ENCODE measurements at regions of chr15 and their contacts with region 1.

Region 1: GRCh38 chr15:44426975-44427755 is at the start of gene CTDSPL2:
- DNase-seq: peak; percentile 99
- ATAC-seq: peak; percentile 95
- H3K4me3 ChIP-seq: peak within 1 kb of the TSS; percentile 95
- H3K27ac ChIP-seq: peak within 1 kb of the TSS; percentile 85
- H3K4me1 ChIP-seq: peaks cover 10% of the 10 kb centered on the region
- H3K27me3 ChIP-seq: no peaks in the 10 kb centered on the region
- CTCF ChIP-seq: peak; percentile 56
- total RNA-seq, gene CTDSPL2: 49.2 and 98.0 TPM in 2 replicates

Region 2: DNA sequence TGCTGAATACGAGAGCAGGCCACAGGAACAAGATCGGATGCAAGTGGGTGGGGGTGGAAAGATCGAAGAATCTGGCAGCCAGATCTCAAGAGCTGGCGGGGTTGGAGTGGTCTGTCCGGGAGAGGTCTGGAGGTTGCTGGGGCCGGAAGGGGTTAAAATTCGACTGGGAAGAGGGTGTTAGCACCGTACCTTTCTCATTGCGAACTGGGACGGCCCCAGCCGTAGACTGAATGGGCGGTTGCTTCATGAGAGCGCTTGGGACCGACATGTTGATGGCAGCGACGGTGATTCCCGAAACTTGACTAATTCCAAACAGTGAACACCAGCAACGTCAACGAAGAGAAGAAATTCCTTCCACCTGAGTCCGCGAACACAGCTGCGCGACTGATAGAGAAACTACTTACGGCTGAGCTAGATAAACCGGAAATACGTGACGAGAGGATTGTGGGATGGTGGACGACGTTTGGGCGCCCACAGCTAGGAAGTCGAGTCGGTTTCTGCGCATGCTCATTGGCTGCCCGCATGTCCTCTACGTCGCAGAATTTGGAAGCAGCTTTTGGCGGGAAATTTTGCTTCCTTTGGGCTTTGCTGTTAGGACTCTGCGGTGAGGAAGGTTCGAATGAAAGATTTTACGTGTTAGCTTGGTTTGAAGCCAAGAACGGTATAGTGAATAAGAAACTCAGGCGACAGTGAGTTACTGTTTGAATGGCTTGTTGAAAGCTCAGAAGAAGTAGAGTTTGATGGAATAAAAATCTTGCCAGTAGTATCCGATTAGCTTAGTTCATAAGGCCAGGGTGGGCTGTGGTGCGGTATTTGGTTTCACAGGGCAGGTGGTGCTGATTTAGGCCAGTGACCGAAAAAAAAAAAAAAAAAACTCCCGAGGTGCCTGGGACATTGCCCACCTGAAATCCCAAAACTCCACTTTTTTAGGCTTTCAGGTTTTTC is 602.6 kb before region 1 on chr15 and contains the start of gene MFAP1:
- CTCF ChIA-PET with region 1: no interaction called
- POLR2A ChIA-PET with region 1: no interaction called
- intact Hi-C with region 1: loop called (anchors 10 kb)
- DNase-seq: peak; percentile 97
- ATAC-seq: peak; percentile 75
- H3K4me3 ChIP-seq: peak within 1 kb of the TSS; percentile 91
- H3K27ac ChIP-seq: peak within 1 kb of the TSS; percentile 85
- H3K4me1 ChIP-seq: peaks cover 34% of the 10 kb centered on the region
- H3K27me3 ChIP-seq: no peaks in the 10 kb centered on the region
- CTCF ChIP-seq: no peak
- total RNA-seq, gene MFAP1: 18.5 and 18.6 TPM in 2 replicates

Region 3: DNA sequence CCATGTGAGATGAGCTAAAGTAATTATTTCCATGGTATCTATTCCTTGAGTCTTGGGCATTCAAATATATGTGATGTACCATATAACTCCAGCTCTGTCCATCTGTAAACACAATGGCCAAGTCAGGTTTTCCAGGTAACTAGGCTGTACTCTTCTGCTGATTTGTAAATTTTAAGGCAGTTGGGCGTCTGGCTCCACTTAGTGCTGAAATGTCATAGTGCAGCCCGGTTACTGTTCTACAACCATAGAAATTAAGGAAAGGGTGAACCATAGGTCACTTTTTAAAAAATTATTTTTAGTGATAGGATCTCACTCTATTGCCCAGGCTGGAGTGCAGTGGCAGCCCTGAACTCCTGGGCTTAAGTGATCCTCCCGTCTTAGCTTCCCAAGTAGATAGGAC is 183.3 kb before region 1 on chr15:
- CTCF ChIA-PET with region 1: no interaction called
- POLR2A ChIA-PET with region 1: interaction called, 10 read pairs
- intact Hi-C with region 1: no loop called
- DNase-seq: peak; percentile 48
- ATAC-seq: peak; percentile 82
- H3K4me3 ChIP-seq: no peak overlapping the region
- H3K27ac ChIP-seq: no peak overlapping the region
- H3K4me1 ChIP-seq: no peaks in the 10 kb centered on the region
- H3K27me3 ChIP-seq: no peaks in the 10 kb centered on the region
- CTCF ChIP-seq: peak; percentile 67

Region 4: GRCh38 chr15:44286814-44287452 is 140.2 kb before region 1 on chr15:
- CTCF ChIA-PET with region 1: interaction called, 5 read pairs
- POLR2A ChIA-PET with region 1: interaction called, 4 read pairs
- intact Hi-C with region 1: loop called (anchors 1 kb)
- DNase-seq: peak; percentile 22
- ATAC-seq: no peak
- H3K4me3 ChIP-seq: peak overlapping the region; percentile 87
- H3K27ac ChIP-seq: no peak overlapping the region
- H3K4me1 ChIP-seq: peaks cover 16% of the 10 kb centered on the region
- H3K27me3 ChIP-seq: no peaks in the 10 kb centered on the region
- CTCF ChIP-seq: no peak

Region 5: GRCh38 chr15:44450172-44450571 is 23.0 kb after region 1 on chr15:
- CTCF ChIA-PET with region 1: no interaction called
- POLR2A ChIA-PET with region 1: no interaction called
- intact Hi-C with region 1: no loop called
- DNase-seq: no peak
- ATAC-seq: no peak
- H3K4me3 ChIP-seq: no peak overlapping the region
- H3K27ac ChIP-seq: no peak overlapping the region
- H3K4me1 ChIP-seq: no peaks in the 10 kb centered on the region
- H3K27me3 ChIP-seq: no peaks in the 10 kb centered on the region
- CTCF ChIP-seq: no peak

Region 6: GRCh38 chr15:44536962-44537734 is 110.0 kb after region 1 on chr15 and contains the start of gene EIF3J:
- CTCF ChIA-PET with region 1: no interaction called
- POLR2A ChIA-PET with region 1: interaction called, 5 read pairs
- intact Hi-C with region 1: loop called (anchors 5 kb)
- DNase-seq: peak; percentile 97
- ATAC-seq: peak; percentile 89
- H3K4me3 ChIP-seq: peak within 1 kb of the TSS; percentile 78
- H3K27ac ChIP-seq: peak within 1 kb of the TSS; percentile 85
- H3K4me1 ChIP-seq: peaks cover 33% of the 10 kb centered on the region
- H3K27me3 ChIP-seq: no peaks in the 10 kb centered on the region
- CTCF ChIP-seq: no peak
- total RNA-seq, gene EIF3J: 38.2 and 39.0 TPM in 2 replicates

Measured in PC-3 (cell line).